Endothelial cell of umbilical vein (primary cell): ENCODE measurements at regions of chr18 and their contacts with region 1.

Region 1: DNA sequence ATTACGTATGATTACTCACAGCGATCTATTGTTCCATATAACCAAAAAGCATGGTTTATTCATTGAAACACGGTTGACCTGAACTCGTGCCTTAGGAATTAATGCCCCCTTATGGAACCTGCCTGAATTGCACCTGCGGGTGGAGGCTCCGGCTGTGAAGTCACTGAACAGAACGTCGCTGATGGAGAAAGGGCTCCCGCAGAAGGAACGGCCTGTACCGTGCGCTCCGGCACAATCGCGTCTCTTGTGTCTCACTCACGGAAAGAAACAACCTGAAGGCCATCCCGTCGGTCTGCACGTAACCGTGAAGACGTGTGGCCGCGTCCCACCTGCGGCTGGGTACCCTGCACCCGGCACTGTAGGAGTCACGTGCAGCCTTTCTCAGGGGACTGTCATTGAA is 133.1 kb downstream of the NFATC1 start:
- DNase-seq: peak; percentile 80
- H3K4me3 ChIP-seq: no peak overlapping the region
- H3K27ac ChIP-seq: no peak overlapping the region
- H3K4me1 ChIP-seq: peaks cover 7% of the 10 kb centered on the region
- H3K27me3 ChIP-seq: no peaks in the 10 kb centered on the region
- CTCF ChIP-seq: peak; percentile 82 to 86
- POLR2A ChIP-seq: no peak

Region 2: GRCh38 chr18:79458131-79458838 is 70.6 kb before region 1 on chr18:
- CTCF ChIA-PET with region 1: no interaction called
- POLR2A ChIA-PET with region 1: no interaction called
- dilution Hi-C with region 1: no loop called
- intact Hi-C with region 1: loop called (anchors 1 kb)
- DNase-seq: peak; percentile 93
- H3K4me3 ChIP-seq: no peak overlapping the region
- H3K27ac ChIP-seq: peak overlapping the region; percentile 98
- H3K4me1 ChIP-seq: peaks cover 40% of the 10 kb centered on the region
- H3K27me3 ChIP-seq: no peaks in the 10 kb centered on the region
- CTCF ChIP-seq: no peak
- POLR2A ChIP-seq: peak; percentile 66

Region 3: GRCh38 chr18:79507076-79507545 is 21.7 kb before region 1 on chr18:
- CTCF ChIA-PET with region 1: interaction called, 5 read pairs
- POLR2A ChIA-PET with region 1: no interaction called
- dilution Hi-C with region 1: no loop called
- intact Hi-C with region 1: loop called (anchors 1 kb)
- DNase-seq: peak; percentile 96
- H3K4me3 ChIP-seq: no peak overlapping the region
- H3K27ac ChIP-seq: peak overlapping the region; percentile 88
- H3K4me1 ChIP-seq: peaks cover 31% of the 10 kb centered on the region
- H3K27me3 ChIP-seq: no peaks in the 10 kb centered on the region
- CTCF ChIP-seq: no peak
- POLR2A ChIP-seq: peak; percentile 66

Region 4: DNA sequence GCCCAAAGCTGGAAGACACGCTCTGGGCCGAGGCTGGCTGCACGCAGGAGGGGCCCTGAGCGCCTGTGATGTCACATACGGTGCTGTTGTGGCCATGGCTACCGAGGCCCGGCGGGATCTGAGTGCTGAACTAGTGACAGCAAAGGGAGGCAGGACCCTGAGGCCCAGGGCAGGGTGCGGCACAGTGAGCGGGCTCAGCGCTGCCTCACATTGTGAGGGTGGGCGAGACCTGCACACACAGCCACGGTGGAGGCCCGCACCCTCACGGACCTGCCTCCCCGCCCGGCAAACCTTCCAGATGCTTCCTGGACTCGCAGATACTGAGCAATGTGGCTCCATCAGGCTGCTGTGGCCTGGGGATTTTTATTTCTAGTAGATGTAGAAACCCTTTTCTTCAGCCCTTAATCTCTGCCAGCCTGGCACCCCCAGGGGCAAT is 16.9 kb after region 1 on chr18:
- CTCF ChIA-PET with region 1: no interaction called
- POLR2A ChIA-PET with region 1: no interaction called
- dilution Hi-C with region 1: no loop called
- intact Hi-C with region 1: no loop called
- DNase-seq: no peak
- H3K4me3 ChIP-seq: no peak overlapping the region
- H3K27ac ChIP-seq: no peak overlapping the region
- H3K4me1 ChIP-seq: no peaks in the 10 kb centered on the region
- H3K27me3 ChIP-seq: no peaks in the 10 kb centered on the region
- CTCF ChIP-seq: no peak
- POLR2A ChIP-seq: no peak

Region 5: DNA sequence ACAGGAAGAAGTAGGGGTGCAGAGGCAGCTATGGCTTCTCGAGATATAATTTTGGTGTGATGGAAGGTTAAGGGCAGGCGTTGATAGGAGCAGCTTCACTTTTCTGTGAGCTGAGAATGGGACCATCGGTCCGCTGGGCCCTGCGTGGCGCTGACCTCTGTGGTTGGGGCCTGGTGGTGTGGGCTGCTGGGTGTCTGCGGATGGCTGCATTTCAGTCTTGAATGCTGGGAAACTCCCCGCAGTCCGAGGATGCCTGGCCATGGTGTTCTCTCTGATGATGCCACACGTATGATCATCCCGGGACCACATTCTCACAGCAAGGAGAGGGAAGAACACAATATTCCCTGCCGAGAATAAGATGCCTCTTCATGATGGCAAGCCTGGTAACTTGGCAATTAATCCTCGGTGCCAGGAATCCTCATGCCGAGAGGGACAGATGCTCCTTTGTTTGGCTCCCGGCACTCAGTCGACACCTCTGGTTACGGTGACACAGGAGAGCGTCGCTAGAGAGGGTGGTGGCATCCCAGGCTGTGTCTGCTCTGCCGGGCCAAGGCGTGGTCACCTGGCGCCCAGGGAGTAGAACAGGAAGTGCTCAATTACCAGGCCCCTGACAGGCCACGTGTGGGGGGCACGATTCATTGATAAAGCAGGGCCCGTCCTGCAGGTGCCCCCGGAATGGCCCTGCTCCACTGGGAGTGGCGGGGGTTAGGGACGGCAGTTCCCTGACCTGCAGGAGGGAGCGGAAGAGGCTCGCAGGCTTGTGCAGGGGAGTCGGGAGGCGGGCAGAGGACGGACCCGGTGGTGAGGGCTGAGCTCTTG is 31.4 kb after region 1 on chr18:
- CTCF ChIA-PET with region 1: no interaction called
- POLR2A ChIA-PET with region 1: no interaction called
- dilution Hi-C with region 1: no loop called
- intact Hi-C with region 1: no loop called
- DNase-seq: no peak
- H3K4me3 ChIP-seq: no peak overlapping the region
- H3K27ac ChIP-seq: no peak overlapping the region
- H3K4me1 ChIP-seq: no peaks in the 10 kb centered on the region
- H3K27me3 ChIP-seq: no peaks in the 10 kb centered on the region
- CTCF ChIP-seq: no peak
- POLR2A ChIP-seq: no peak

Region 6: GRCh38 chr18:79644006-79644665 is 115.3 kb after region 1 on chr18:
- CTCF ChIA-PET with region 1: interaction called, 3 read pairs
- POLR2A ChIA-PET with region 1: no interaction called
- dilution Hi-C with region 1: no loop called
- intact Hi-C with region 1: loop called (anchors 1 kb)
- DNase-seq: peak; percentile 49
- H3K4me3 ChIP-seq: no peak overlapping the region
- H3K27ac ChIP-seq: no peak overlapping the region
- H3K4me1 ChIP-seq: no peaks in the 10 kb centered on the region
- H3K27me3 ChIP-seq: no peaks in the 10 kb centered on the region
- CTCF ChIP-seq: peak; percentile 89 to 90
- POLR2A ChIP-seq: no peak